ENCODE measurements at regions of chr2 and their contacts with region 1.

Region 1: DNA sequence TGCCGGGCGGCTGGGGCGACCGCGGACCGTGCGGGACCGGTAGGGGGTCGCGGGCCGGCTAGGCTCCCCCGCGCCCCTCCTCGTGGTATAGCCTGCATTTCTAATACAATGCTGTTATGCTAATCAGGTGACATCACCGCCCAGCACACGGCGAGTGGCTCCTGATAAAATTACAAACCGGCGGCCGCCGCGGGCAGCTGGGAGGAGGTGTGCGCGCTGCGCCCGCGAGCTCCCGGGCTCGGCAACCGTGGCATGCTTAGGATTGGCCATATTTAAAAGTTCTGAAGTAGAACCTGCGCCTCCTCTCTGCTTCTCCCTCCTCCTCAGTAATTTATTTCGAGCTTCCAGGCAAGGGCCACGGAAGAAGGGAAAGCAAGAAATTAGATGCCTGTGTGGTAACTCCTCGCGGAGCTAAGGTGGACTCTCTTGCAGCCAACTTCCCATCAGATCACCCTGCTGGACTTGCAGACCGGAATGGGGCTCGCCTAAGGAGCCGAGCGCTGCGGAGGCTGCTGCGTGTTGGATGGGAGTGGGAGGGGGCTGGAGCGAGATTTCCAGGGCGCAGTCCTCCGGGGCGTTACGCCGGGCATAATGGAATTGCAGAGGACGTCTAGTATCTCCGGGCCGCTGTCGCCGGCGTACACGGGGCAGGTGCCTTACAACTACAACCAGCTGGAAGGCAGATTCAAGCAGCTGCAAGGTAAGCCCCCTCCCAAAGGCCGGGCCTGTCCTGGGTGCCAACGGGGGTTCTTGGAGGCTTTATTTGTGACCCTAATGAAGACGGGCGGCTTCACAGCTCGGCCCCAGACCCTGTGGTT is 102.3 kb downstream of the SPTBN1 start:
- H3K4me3 ChIP-seq: peak overlapping the region; percentile 76
- H3K27ac ChIP-seq: peak overlapping the region; percentile 96
- H3K4me1 ChIP-seq: peaks cover 5% of the 10 kb centered on the region
- CTCF ChIP-seq: no peak

Region 2: GRCh38 chr2:54492335-54492734 is 66.1 kb before region 1 on chr2:
- CTCF ChIA-PET with region 1: no interaction called
- POLR2A ChIA-PET with region 1: interaction called, 10 read pairs
- H3K4me3 ChIP-seq: no peak overlapping the region
- H3K27ac ChIP-seq: no peak overlapping the region
- H3K4me1 ChIP-seq: peaks cover 9% of the 10 kb centered on the region
- CTCF ChIP-seq: no peak

Region 3: DNA sequence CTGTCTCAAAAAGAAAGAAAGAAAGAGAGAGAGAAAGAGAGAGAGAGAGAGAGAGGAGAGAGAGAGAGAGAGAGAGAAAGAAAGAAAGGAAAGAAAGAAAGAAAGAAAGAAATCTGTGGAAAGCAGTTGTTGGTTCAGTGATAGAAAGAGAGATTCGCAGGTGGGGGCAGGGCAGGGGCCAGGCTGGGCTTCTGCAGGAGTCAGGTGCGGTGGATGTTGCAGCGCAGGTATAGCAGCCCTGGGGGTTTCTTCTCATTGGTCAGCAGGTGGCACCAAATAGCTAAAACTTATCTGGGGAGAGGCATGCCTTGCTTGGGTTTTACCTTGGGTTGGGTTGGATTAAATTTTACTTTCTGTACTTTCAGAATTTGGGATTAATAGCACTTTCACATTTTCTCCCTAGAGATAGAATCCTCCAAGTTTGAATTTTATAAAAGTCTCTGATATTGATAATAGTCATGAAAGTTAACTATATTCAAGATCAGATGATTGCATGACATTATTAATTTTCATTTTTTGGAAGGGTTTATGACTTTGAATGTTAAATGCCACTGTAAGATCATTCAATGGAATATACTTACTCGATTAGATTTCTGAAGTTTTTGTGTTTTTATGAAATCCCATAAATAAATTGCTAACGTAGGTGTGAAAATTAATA is 35.6 kb before region 1 on chr2:
- CTCF ChIA-PET with region 1: interaction called, 24 read pairs
- POLR2A ChIA-PET with region 1: interaction called, 7 read pairs
- H3K4me3 ChIP-seq: no peak overlapping the region
- H3K27ac ChIP-seq: no peak overlapping the region
- H3K4me1 ChIP-seq: 0 out of 2 replicates have a peak, but pooled peaks cover 3% of the 10 kb centered on the region
- CTCF ChIP-seq: peak; percentile 71; the same call in 1 of the 2 replicates

Region 4: DNA sequence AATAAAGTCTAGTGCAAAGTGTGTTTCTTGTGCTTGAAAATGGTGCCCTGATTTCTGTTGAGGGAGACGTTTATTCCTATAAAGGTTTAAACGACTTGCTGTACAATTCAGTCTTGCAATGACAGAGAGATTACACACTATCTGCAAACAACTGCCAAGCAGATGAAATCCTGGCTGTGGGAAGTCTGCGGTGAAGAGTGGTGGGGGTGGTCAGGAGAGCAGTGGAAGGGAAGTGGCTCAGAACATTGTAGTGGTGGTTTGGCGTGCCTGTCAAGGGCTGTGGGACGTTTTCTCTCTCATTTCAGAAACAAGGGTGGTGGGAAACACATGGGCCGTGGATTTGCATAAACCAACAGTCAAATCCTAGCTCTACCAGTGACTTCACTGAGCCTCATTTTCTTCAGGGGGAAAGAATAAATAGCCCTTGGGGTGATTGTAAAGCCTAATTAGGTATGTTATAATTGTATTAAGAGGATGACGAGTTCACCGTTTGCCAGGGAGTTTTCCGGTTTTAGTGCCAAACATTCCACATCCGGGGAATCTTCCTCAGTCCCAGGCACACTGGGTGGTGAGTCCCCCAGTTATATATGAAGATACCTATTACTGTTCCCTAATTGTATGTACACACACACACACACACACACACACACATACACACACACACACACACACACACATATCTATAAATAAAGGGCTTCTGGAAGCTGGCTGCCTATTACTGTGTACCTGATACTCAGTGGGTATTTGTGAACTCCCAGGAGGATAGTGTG is 12.7 kb after region 1 on chr2:
- CTCF ChIA-PET with region 1: interaction called, 3 read pairs
- POLR2A ChIA-PET with region 1: interaction called, 48 read pairs
- H3K4me3 ChIP-seq: no peak overlapping the region
- H3K27ac ChIP-seq: peak overlapping the region; percentile 98
- H3K4me1 ChIP-seq: peaks cover 62% of the 10 kb centered on the region
- CTCF ChIP-seq: no peak